IMR-90 (cell line): ENCODE measurements at regions of chr9 and their contacts with region 1.

Region 1: DNA sequence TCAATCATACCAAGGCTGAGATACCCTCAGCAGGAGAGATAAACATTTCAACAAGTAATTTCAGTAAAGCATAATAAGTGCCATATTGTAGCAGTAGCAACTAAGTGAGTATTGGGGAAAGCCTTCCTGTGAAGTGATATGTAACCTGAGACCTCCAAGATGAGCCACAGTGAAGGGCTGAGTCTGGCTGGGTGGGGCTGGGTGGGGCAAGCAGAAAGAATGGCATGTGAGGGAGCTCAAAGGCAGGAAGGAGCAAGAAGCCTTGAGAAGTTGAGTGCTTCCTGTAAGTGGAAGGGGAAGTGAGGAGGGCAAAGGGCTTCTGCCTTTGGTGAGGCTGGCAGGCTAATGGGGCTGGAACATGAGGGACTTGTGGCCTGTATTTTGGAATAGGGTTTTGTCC is 19.7 kb upstream of the ASTN2 start:
- DNase-seq: no peak
- ATAC-seq: no peak
- H3K4me3 ChIP-seq: no peak overlapping the region
- H3K27ac ChIP-seq: no peak overlapping the region
- H3K4me1 ChIP-seq: no peaks in the 10 kb centered on the region
- H3K27me3 ChIP-seq: no peaks in the 10 kb centered on the region
- CTCF ChIP-seq: no peak
- POLR2A ChIP-seq: no peak
- RAD21 ChIP-seq: no peak

Region 2: DNA sequence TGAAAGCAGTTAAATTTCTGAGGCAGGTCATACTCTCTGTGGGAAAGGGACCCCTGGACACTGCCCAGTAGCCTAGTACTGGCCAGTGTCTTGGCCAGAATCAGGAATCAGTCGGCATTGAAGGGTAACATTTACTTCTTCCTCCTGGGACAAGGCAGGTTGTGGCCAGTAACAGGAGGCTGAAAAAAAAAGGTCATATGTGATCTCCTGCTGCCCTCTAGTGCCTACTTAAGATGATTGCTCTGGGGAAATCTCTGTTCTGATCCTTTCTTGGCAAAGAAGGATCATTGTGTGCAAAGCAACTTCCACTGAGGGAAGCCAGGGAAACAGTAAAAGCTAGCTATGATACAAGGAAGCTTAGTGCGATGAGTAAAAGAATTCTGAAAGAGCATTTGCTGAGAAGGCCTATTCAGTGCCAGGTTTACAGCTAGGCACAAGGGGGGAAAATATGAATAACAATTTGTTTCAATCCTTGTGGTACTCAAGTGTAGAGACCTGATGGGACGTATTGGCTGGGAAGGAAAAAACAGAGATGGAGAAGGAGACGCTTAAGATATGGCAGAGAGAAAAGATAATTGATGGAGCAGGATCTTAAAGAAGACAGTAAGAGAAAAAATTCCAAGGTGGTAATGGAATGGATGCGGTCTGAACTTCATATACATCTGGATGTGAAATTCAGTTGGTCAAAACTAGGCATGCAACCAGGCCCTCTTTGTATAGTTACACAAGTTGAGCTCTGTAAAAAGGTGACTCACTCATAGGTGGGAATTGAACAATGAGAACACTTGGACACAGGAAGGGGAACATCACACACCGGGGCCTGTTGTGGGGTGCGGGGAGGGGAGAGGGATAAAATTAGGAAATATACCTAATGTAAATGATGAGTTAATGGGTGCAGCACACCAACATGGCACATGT is 773.3 kb before region 1 on chr9:
- CTCF ChIA-PET with region 1: no interaction called
- POLR2A ChIA-PET with region 1: no interaction called
- dilution Hi-C with region 1: no loop called
- in situ Hi-C with region 1: no loop called
- intact Hi-C with region 1: no loop called
- DNase-seq: peak; percentile 84
- ATAC-seq: peak; percentile 86
- H3K4me3 ChIP-seq: no peak overlapping the region
- H3K27ac ChIP-seq: no peak overlapping the region
- H3K4me1 ChIP-seq: peaks cover 3% of the 10 kb centered on the region; the same call in 1 of the 2 replicates
- H3K27me3 ChIP-seq: no peaks in the 10 kb centered on the region; the same call in 1 of the 2 replicates
- CTCF ChIP-seq: peak; percentile 82
- POLR2A ChIP-seq: no peak
- RAD21 ChIP-seq: peak; percentile 86

Region 3: GRCh38 chr9:117485176-117485575 is 50.6 kb after region 1 on chr9:
- CTCF ChIA-PET with region 1: no interaction called
- POLR2A ChIA-PET with region 1: no interaction called
- dilution Hi-C with region 1: no loop called
- in situ Hi-C with region 1: no loop called
- intact Hi-C with region 1: loop called (anchors 2 kb)
- DNase-seq: no peak
- ATAC-seq: no peak
- H3K4me3 ChIP-seq: no peak overlapping the region
- H3K27ac ChIP-seq: no peak overlapping the region
- H3K4me1 ChIP-seq: no peaks in the 10 kb centered on the region
- H3K27me3 ChIP-seq: no peaks in the 10 kb centered on the region
- CTCF ChIP-seq: no peak
- POLR2A ChIP-seq: no peak
- RAD21 ChIP-seq: no peak